Motor neuron (in vitro differentiated cells): ENCODE measurements at regions of chr1 and their contacts with region 1.

Region 1: DNA sequence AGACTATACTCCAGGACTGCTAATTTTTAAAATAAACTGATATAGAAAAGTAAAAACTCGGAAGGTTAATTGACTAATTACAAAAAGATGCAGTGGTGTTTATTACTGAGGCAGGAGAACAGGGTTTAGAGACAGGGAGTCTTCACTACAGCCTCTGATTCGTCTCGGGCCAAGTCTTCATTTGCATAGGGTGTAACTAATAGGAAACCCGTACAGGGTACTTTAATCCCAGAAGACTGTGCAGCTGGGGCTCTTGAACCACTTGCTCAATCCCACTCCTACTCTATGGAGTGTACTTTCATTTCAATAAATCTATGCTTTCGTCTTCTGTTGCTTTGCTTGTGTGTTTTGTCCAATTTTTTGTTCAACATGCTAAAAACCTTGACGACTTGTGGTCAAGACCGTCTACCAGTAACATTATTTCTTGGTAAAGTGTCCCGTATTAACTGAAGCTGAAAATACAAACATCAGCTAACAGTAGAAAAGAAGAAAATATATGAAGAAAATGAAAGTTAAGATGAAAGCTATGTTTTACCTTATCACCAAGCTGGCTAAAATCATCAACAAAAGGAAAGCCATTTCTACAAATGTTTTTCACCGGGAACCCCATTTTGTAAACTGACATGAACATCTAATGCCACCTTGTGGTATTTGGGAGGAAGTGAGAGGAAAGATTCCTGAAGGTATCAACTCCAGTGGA is 8.0 kb downstream of the SDHB start:
- ATAC-seq: peak; percentile 48 to 99 (median 60)
- H3K4me3 ChIP-seq: no peak overlapping the region
- H3K27ac ChIP-seq: no peak overlapping the region
- H3K4me1 ChIP-seq: peaks cover 3 to 5% of the 10 kb centered on the region in 2 donors

Region 2: GRCh38 chr1:16418823-16419425 is 626.9 kb before region 1 on chr1:
- in situ Hi-C with region 1: no loop called
- ATAC-seq: no peak
- H3K4me3 ChIP-seq: no peak overlapping the region
- H3K27ac ChIP-seq: no peak overlapping the region
- H3K4me1 ChIP-seq: peaks cover 9 to 10% of the 10 kb centered on the region in 2 donors

Region 3: DNA sequence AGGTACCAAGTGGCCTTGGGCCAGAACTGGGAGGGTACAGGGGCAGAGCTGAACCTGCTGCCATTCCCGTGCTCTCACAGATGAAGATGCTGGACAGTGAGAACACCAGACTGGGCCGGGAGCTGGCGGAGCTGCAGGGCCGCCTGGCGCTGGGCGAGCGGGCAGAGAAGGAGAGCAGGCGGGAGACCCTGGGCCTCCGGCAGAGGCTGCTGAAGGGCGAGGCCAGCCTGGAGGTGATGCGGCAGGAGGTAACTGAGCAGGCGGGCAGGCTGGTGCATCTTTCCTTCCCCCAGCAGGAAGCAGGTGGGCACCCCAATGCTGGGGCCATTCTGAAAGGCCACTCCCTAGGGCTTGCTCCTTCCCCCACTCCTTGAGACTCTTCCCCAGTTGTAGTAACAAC is 87.3 kb before region 1 on chr1:
- in situ Hi-C with region 1: loop called in 1 of 9 experiments (anchors 10 kb)
- ATAC-seq: no peak
- H3K4me3 ChIP-seq: no peak overlapping the region
- H3K27ac ChIP-seq: no peak overlapping the region
- H3K4me1 ChIP-seq: no peaks in the 10 kb centered on the region